ENCODE measurements at regions of chr18 and their contacts with region 1.

Region 1: GRCh38 chr18:23703057-23703986 is 14.1 kb downstream of the LAMA3 start:
- DNase-seq: no peak
- H3K4me3 ChIP-seq: no peak overlapping the region
- CTCF ChIP-seq: peak; percentile 43

Region 2: GRCh38 chr18:23416298-23416697 is 287.0 kb before region 1 on chr18:
- CTCF ChIA-PET with region 1: interaction called, 10 read pairs
- POLR2A ChIA-PET with region 1: no interaction called
- DNase-seq: no peak
- H3K4me3 ChIP-seq: no peak overlapping the region
- CTCF ChIP-seq: no peak

Region 3: GRCh38 chr18:23515911-23516546 is 187.3 kb before region 1 on chr18:
- CTCF ChIA-PET with region 1: interaction called, 48 read pairs
- POLR2A ChIA-PET with region 1: no interaction called
- DNase-seq: no peak
- H3K4me3 ChIP-seq: no peak overlapping the region
- CTCF ChIP-seq: peak; percentile 93

Region 4: DNA sequence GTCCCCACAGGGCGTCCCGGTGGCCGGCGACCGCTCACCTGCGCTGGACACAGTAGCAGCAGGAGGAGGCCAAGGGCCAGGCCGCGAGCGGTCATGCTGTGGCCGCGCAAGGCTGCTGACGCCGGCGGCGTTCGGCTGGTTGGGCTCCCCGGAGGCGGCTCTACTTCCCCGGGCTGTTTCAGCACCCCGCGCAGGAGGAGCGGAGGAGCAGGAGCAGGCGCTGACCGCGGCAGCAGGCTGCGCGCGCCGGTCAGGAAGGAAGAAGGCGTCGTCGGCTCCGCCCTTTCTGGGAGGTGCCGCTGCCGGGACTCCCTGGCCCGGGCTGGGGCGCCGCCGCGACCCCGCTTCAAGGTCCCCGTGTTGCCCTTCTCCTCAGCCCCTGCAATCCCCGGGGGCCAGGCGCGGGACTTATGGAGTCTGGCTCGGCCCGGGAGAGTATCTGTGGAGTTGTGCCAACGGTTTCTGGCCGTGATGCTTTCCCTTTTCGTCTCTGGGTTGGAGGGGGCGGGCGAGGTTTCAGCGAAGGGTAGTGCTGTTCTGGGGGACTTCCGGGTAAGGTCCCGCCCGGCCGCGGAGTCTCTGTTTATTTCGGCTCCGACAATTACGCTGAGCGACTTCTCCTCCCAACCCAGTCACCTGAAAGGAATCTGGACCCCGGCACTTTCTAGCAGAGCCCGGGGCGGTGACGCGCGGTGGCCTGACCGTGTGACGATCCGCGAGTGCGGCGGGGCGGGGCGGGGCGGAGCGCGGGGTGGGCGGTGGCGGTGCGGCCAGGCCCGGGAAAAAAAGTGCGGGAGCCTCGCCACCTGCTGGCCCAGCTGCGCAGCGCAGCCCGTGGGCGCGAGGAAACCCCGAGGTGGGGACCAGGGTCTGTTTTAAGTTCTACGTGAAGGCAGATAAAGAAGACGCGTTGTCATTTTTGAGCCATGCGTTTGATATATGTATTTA is 116.8 kb before region 1 on chr18 and contains the start of gene NPC1:
- CTCF ChIA-PET with region 1: interaction called, 34 read pairs
- POLR2A ChIA-PET with region 1: no interaction called
- DNase-seq: no peak
- H3K4me3 ChIP-seq: peak within 1 kb of the TSS; percentile 90
- CTCF ChIP-seq: peak; percentile 92

Region 5: GRCh38 chr18:23619388-23619881 is 83.9 kb before region 1 on chr18:
- CTCF ChIA-PET with region 1: interaction called, 230 read pairs
- POLR2A ChIA-PET with region 1: no interaction called
- DNase-seq: no peak
- H3K4me3 ChIP-seq: peak overlapping the region; percentile 57
- CTCF ChIP-seq: peak; percentile 0

Region 6: DNA sequence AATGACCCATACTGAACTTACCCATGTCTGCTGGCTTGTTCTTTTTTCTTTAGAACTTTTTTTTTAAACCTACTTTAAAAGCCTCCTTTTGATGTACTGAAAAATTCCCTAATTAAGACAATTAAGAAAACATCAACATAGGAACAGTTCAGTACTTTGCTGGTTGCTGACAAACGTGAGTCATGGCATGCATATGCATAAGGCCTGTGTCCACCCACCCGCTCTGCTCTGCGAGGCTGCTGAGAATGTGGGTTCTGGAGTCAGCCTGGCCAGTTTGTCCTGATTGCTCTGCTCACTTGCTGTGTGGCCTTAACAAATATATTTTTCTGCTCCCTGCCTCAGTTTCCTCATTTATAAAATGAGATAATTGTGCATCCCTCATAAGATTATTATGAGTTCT is 13.2 kb after region 1 on chr18:
- CTCF ChIA-PET with region 1: interaction called, 28 read pairs
- POLR2A ChIA-PET with region 1: no interaction called
- DNase-seq: no peak
- H3K4me3 ChIP-seq: no peak overlapping the region
- CTCF ChIP-seq: no peak

Measured in AG04449 (cell line).